Pancreas (tissue), 10 donors: ENCODE measurements at regions of chr10 and their contacts with region 1.

Region 1: GRCh38 chr10:116787893-116788665 is 45.7 kb upstream of the HSPA12A start:
- DNase-seq: peak; percentile 50 to 92 (median 74)
- ATAC-seq: peak; percentile 82 to 99 (median 92)
- H3K4me3 ChIP-seq: peak overlapping the region in 2 of 4 donors; percentile 26 to 33
- H3K27ac ChIP-seq: no peak overlapping the region
- H3K4me1 ChIP-seq: no peaks in the 10 kb centered on the region
- H3K27me3 ChIP-seq: no peaks in the 10 kb centered on the region
- CTCF ChIP-seq: peak; percentile 97 to 99 (median 98)

Region 2: DNA sequence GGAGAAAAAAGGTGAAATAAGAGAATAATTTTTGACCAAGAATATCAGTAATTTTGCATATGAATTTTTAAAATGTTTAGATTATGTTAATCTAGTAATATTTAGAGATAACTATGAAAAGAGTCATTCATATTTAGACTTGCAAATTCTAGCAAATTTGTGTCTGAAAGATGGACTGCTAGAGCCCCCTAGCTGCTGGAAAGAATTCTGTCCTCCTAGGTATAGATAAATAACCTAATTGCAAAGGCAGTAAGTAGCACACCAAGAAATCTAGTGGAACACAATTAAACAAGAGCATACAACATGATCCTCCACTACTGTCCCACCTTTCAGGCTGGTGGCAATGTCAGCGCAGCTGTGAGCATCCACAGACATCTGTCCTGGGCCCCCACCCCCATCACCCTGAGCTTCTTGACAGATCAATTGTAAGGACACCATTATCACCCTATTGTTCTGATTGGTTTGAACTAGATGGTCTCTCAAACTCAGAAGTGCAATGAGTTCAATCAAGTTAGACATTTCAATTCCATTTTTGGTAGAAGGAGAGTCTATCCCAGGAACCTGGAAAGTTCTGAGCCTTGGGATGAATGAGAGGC is 500.1 kb before region 1 on chr10:
- intact Hi-C with region 1: no loop called
- DNase-seq: peak in 3 of 6 donors; percentile 15 to 56 (median 20)
- ATAC-seq: peak in 3 of 4 donors; percentile 60 to 82 (median 78)
- H3K4me3 ChIP-seq: no peak overlapping the region
- H3K27ac ChIP-seq: no peak overlapping the region
- H3K4me1 ChIP-seq: no peaks in the 10 kb centered on the region
- H3K27me3 ChIP-seq: peaks cover 0 to 3% (median 0%) of the 10 kb centered on the region in 4 donors
- CTCF ChIP-seq: peak; percentile 36 to 54 (median 48)

Region 3: DNA sequence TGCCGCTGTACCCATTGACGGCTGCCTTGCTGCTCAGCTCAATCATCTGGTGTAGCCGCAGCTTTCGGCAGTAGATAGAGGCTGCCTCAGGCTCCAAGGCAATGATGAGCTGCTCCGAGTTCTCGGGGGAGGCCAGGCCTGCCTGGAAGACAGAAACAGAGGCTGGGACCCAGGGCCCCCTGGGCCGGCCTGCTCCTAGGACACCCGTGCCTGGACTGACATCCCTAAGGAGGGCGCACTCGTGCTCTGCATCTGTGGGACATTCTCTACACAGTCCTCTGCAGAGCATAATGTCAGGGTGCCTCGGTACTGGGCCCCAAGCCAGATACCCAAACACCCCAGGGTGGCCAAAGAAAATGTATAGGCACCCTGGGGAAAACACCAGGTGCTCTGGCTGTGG is 104.3 kb before region 1 on chr10:
- intact Hi-C with region 1: loop called in 2 of 3 experiments (anchors 2 to 5 kb)
- DNase-seq: no peak
- ATAC-seq: no peak
- H3K4me3 ChIP-seq: no peak overlapping the region
- H3K27ac ChIP-seq: no peak overlapping the region
- H3K4me1 ChIP-seq: no peaks in the 10 kb centered on the region
- H3K27me3 ChIP-seq: no peaks in the 10 kb centered on the region
- CTCF ChIP-seq: no peak